CD4-positive, alpha-beta T cell (primary cell): ENCODE measurements at regions of chr17 and their contacts with region 1.

Region 1: DNA sequence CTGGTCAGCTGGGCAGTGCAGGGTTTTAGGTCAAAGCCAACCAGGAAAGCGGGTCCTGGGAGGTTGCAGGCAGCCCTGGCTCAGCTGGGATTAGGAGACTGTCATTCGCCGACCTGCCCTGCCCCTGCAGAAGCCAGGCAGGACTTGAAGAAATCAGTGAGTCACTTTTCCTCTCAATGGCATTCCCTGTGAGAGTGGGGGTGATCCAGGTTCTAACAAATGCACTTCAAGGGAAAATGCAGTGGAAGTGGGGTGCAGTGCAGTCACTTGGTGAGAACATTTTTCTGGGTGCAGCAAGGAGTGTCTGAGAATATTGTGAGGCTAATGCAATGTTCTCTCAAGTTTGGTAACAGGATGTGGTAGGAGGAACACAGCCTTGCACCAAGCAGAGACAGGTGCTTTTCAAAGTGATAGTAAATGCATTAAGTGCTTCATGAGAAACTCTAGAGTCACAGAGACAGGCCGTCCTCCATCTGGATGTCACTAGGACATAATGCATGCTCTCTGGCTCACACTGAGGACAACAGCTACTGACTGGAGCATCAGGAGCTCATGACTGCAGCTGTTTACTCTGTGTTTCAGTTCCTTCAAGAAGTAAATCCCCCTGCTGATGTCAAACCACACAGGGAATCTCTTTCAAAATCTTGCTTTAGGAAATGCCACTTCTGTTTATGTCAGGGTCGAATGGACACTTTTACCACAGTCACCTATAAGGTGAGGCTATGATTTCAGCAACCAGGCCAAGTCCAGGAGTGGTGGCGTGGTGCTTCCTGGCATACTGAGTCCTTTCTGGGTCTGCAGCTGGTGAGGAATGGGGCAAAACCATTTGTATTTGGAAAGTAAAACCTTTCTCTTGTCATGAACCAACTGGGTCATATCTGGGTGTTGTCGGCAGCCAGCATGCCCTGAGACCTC is 16.7 kb downstream of the CDK5R1 start:
- DNase-seq: peak in 11 of 14 experiments; percentile 25 to 89 (median 49)
- ATAC-seq: peak; percentile 90
- H3K4me3 ChIP-seq: peak overlapping the region; percentile 11
- H3K4me3 Mint-ChIP-seq: peak overlapping the region; percentile 64
- H3K27ac ChIP-seq: peak overlapping the region; percentile 87 to 91
- H3K27ac Mint-ChIP-seq: peak overlapping the region; percentile 98
- H3K4me1 ChIP-seq: peaks cover 67% of the 10 kb centered on the region
- H3K4me1 Mint-ChIP-seq: peaks cover 78% of the 10 kb centered on the region
- H3K27me3 ChIP-seq: no peaks in the 10 kb centered on the region
- H3K27me3 Mint-ChIP-seq: no peaks in the 10 kb centered on the region
- CTCF ChIP-seq: no peak

Region 2: GRCh38 chr17:32491371-32492263 is 11.9 kb before region 1 on chr17:
- CTCF ChIA-PET with region 1: interaction called, 3 read pairs
- POLR2A ChIA-PET with region 1: interaction called, 51 read pairs
- intact Hi-C with region 1: loop called in 1 of 2 experiments (anchors 2 kb)
- DNase-seq: peak in 4 of 14 experiments; percentile 12 to 54 (median 44)
- ATAC-seq: peak; percentile 9
- H3K4me3 ChIP-seq: peak overlapping the region; percentile 10
- H3K4me3 Mint-ChIP-seq: peak overlapping the region; percentile 89
- H3K27ac ChIP-seq: peak overlapping the region; percentile 47 to 63
- H3K27ac Mint-ChIP-seq: peak overlapping the region; percentile 95
- H3K4me1 ChIP-seq: peaks cover 88% of the 10 kb centered on the region
- H3K4me1 Mint-ChIP-seq: peaks cover 65% of the 10 kb centered on the region
- H3K27me3 ChIP-seq: no peaks in the 10 kb centered on the region
- H3K27me3 Mint-ChIP-seq: no peaks in the 10 kb centered on the region
- CTCF ChIP-seq: no peak

Region 3: GRCh38 chr17:32519228-32520103 is 16.0 kb after region 1 on chr17:
- CTCF ChIA-PET with region 1: no interaction called
- POLR2A ChIA-PET with region 1: interaction called, 63 read pairs
- intact Hi-C with region 1: loop called in 1 of 2 experiments (anchors 2 kb)
- DNase-seq: peak in 13 of 14 experiments; percentile 60 to 87 (median 76)
- ATAC-seq: peak; percentile 49
- H3K4me3 ChIP-seq: peak overlapping the region; percentile 43
- H3K4me3 Mint-ChIP-seq: peak overlapping the region; percentile 83
- H3K27ac ChIP-seq: peak overlapping the region; percentile 84
- H3K27ac Mint-ChIP-seq: peak overlapping the region; percentile 87
- H3K4me1 ChIP-seq: peaks cover 65% of the 10 kb centered on the region
- H3K4me1 Mint-ChIP-seq: peaks cover 85% of the 10 kb centered on the region
- H3K27me3 ChIP-seq: no peaks in the 10 kb centered on the region
- H3K27me3 Mint-ChIP-seq: no peaks in the 10 kb centered on the region
- CTCF ChIP-seq: no peak

Region 4: GRCh38 chr17:32609085-32609484 is 105.6 kb after region 1 on chr17:
- CTCF ChIA-PET with region 1: interaction called, 3 read pairs
- POLR2A ChIA-PET with region 1: no interaction called
- intact Hi-C with region 1: loop called in 1 of 2 experiments (anchors 5 kb)
- DNase-seq: peak; percentile 58 to 85 (median 70)
- ATAC-seq: peak; percentile 100
- H3K4me3 ChIP-seq: no peak overlapping the region
- H3K4me3 Mint-ChIP-seq: no peak overlapping the region
- H3K27ac ChIP-seq: no peak overlapping the region
- H3K27ac Mint-ChIP-seq: no peak overlapping the region
- H3K4me1 ChIP-seq: no peaks in the 10 kb centered on the region
- H3K4me1 Mint-ChIP-seq: peaks cover 6% of the 10 kb centered on the region
- H3K27me3 ChIP-seq: no peaks in the 10 kb centered on the region
- H3K27me3 Mint-ChIP-seq: no peaks in the 10 kb centered on the region
- CTCF ChIP-seq: peak; percentile 83

Region 5: GRCh38 chr17:32828822-32829221 is 325.3 kb after region 1 on chr17:
- CTCF ChIA-PET with region 1: no interaction called
- POLR2A ChIA-PET with region 1: no interaction called
- intact Hi-C with region 1: no loop called
- DNase-seq: no peak
- ATAC-seq: no peak
- H3K4me3 ChIP-seq: no peak overlapping the region
- H3K4me3 Mint-ChIP-seq: no peak overlapping the region
- H3K27ac ChIP-seq: no peak overlapping the region
- H3K27ac Mint-ChIP-seq: no peak overlapping the region
- H3K4me1 ChIP-seq: no peaks in the 10 kb centered on the region
- H3K4me1 Mint-ChIP-seq: peaks cover 7% of the 10 kb centered on the region
- H3K27me3 ChIP-seq: peaks cover 4 to 12% of the 10 kb centered on the region in 2 experiments
- H3K27me3 Mint-ChIP-seq: peaks cover 19% of the 10 kb centered on the region
- CTCF ChIP-seq: no peak